Posterior vena cava (tissue), 2 donors: ENCODE measurements at regions of chr6 and their contacts with region 1.

Region 1: DNA sequence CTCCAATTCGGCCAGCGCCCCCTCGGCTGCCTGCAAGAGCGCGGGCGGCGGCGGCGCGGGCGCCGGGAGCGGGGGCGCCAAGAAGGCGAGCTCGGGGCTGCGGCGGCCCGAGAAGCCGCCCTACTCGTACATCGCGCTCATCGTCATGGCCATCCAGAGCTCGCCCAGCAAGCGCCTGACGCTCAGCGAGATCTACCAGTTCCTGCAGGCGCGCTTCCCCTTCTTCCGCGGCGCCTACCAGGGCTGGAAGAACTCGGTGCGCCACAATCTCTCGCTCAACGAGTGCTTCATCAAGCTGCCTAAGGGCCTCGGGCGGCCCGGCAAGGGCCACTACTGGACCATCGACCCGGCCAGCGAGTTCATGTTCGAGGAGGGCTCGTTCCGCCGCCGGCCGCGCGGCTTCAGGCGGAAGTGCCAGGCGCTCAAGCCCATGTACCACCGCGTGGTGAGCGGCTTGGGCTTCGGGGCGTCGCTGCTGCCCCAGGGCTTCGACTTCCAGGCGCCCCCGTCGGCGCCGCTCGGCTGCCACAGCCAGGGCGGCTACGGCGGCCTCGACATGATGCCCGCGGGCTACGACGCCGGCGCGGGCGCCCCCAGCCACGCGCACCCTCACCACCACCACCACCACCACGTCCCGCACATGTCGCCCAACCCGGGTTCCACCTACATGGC is 893 bp downstream of the FOXF2 start:
- DNase-seq: no peak

Region 2: GRCh38 chr6:636488-636887 is 753.8 kb before region 1 on chr6:
- intact Hi-C with region 1: no loop called
- DNase-seq: no peak

Region 3: DNA sequence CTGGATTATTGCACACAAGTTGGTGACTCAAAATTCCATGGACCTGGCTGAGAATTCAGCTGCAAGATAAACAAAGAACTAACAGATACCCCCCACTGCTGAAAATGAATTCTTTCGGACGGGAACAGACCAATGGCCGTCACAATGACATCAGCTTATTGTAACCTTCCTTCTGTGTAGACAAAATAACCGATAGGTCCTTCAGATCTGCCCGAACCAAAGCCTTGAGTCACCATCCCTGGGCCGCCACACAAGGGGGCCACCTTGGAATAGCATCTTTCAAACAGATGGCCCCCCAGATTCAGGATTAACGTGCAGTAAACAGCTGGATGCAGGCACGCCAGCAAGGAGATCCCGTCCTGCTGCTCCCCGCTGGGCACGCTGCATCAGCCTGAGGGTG is 483.3 kb before region 1 on chr6:
- intact Hi-C with region 1: loop called (anchors 5 to 10 kb)
- DNase-seq: no peak

Region 4: DNA sequence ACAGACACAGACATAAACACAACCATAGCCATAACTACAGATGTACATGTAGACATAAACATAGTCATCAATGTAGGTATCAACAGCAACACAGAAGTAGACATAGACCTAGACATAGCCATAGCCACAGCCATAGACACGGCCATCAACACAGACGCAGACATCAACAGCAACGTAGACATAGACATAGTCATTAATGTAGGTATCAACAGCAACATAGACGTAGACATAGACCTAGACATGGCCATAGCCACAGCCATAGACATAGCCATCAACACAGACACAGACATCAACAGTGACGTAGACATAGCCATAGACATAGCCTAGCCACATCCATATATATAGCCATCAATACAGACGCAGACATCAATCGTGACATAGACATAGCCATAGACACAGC is 336.7 kb before region 1 on chr6:
- intact Hi-C with region 1: no loop called
- DNase-seq: no peak